Spleen (tissue), 13 donors: ENCODE measurements at regions of chr2 and their contacts with region 1.

Region 1: DNA sequence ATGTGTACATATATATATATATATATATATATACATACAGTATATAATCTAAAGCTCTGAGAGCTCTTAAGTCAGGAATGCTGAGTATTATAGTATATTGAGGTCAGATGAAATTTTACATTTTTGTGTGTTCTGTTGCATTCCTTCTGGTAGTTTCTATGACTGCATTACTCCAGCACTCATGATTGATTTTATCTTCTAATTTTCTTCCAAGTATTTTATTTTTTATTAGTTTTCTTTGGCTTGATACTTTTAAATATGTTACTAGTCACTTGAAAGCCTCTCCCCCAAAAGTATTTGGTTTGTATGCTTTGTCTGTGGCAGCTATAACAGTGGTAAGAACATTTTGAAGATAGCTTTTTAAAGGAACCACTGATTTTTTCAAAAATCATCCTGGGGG is 25.0 kb downstream of the METTL21A start:
- DNase-seq: no peak
- H3K4me3 ChIP-seq: no peak overlapping the region
- H3K27ac ChIP-seq: no peak overlapping the region
- H3K4me1 ChIP-seq: peaks cover 0 to 44% (median 1%) of the 10 kb centered on the region in 6 donors
- H3K27me3 ChIP-seq: no peaks in the 10 kb centered on the region
- CTCF ChIP-seq: no peak
- POLR2A ChIP-seq: no peak

Region 2: GRCh38 chr2:207375192-207375861 is 224.9 kb before region 1 on chr2:
- intact Hi-C with region 1: no loop called
- DNase-seq: no peak
- H3K4me3 ChIP-seq: no peak overlapping the region
- H3K27ac ChIP-seq: no peak overlapping the region
- H3K4me1 ChIP-seq: no peaks in the 10 kb centered on the region
- H3K27me3 ChIP-seq: no peaks in the 10 kb centered on the region
- CTCF ChIP-seq: no peak
- POLR2A ChIP-seq: no peak

Region 3: DNA sequence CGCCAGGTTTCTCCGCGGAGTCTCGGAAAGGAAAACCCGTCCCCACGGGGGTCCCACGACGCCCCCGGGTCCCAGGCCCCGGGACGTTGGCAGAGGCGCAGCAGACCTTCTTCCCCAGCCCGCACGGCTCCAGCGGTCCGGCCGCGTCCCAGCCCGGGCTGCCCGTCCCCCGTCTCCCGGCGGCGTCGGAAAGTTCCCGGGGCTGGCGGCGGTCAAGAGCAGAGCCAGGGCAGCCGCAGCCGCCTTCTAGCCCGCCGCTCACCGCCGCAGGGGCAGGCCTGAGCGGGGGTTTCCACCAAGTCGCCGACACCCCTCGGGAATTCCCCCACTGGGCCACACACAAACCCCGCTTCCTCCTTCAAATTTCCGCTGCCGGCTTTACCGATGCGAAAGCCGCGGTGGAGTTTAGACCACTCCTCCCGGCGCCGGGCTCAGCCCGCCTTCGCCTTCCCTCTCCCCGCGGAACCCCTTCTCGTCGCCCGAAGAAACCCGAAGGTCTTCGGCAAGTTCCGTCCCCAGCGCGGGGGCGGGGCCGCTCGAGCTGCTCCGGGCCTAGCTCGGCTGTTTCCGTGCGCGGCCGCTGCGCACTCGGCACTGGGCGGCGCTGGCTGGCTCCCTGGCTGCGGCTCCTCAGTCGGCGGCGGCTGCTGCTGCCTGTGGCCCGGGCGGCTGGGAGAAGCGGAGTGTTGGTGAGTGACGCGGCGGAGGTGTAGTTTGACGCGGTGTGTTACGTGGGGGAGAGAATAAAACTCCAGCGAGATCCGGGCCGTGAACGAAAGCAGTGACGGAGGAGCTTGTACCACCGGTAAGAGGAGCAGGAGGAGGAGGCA is 70.7 kb before region 1 on chr2 and contains the start of gene CREB1:
- intact Hi-C with region 1: loop called (anchors 10 kb)
- DNase-seq: peak; percentile 100
- H3K4me3 ChIP-seq: peak within 1 kb of the TSS; percentile 52 to 89 (median 66)
- H3K27ac ChIP-seq: peak within 1 kb of the TSS; percentile 95 to 100 (median 99)
- H3K4me1 ChIP-seq: peaks cover 38 to 84% (median 61%) of the 10 kb centered on the region in 6 donors
- H3K27me3 ChIP-seq: no peaks in the 10 kb centered on the region
- CTCF ChIP-seq: peak in 3 of 11 experiments; percentile 25 to 44 (median 43)
- POLR2A ChIP-seq: peak; percentile 76 to 97 (median 95)
- total RNA-seq, gene CREB1: 70.2 to 94.7 (median 83.9) TPM

Region 4: GRCh38 chr2:207807516-207807915 is 207.3 kb after region 1 on chr2:
- intact Hi-C with region 1: no loop called
- DNase-seq: no peak
- H3K4me3 ChIP-seq: no peak overlapping the region
- H3K27ac ChIP-seq: no peak overlapping the region
- H3K4me1 ChIP-seq: peaks cover 0 to 16% (median 9%) of the 10 kb centered on the region in 6 donors
- H3K27me3 ChIP-seq: no peaks in the 10 kb centered on the region
- CTCF ChIP-seq: no peak
- POLR2A ChIP-seq: no peak